RWPE1 (cell line): ENCODE measurements at regions of chr5 and their contacts with region 1.

Region 1: DNA sequence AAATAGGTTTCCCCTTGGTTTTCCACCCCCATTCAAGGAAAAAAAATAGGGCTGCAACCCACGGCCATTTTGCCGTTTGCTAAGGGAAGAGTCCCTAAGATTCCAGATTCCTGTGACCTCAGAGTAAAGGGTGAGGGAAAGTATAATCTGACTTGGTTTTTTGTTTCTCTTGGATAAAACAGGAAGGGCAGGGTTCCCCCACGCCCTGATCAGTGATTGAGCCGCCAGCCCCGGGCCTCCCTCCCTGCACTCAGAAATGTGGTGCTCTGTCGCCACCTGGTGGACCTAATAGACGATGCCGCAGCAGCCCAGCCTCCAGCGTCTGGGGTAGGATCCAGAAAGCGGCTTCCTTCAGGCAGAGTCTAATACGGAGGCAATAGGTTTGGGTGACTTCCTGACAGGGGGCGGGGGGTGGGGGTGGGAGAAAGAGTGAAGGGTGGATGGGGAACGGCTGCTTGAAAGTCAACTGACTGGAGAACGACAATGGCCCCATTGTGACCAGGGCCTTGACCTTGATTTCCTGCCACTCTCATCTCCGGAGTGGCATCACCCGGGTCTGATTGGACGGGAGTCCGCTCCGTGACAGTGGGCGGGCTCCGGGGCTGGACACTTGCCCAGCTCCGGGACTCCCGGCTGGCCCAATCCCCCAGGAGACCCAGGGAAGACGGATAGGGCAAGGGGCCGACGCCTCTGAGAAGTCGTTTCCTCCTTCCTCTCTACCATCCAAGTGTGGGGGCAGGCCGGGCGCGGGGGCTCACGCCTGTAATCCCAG is 17.8 kb upstream of the CYSTM1 start:
- DNase-seq: peak; percentile 96
- H3K27ac ChIP-seq: no peak overlapping the region
- CTCF ChIP-seq: peak; percentile 94

Region 2: GRCh38 chr5:139822553-139823425 is 334.4 kb before region 1 on chr5:
- CTCF ChIA-PET with region 1: no interaction called
- POLR2A ChIA-PET with region 1: no interaction called
- DNase-seq: no peak
- H3K27ac ChIP-seq: no peak overlapping the region
- CTCF ChIP-seq: no peak

Region 3: GRCh38 chr5:140075371-140075770 is 81.8 kb before region 1 on chr5:
- CTCF ChIA-PET with region 1: interaction called, 26 read pairs
- POLR2A ChIA-PET with region 1: no interaction called
- DNase-seq: peak; percentile 44
- H3K27ac ChIP-seq: no peak overlapping the region
- CTCF ChIP-seq: peak; percentile 45; the same call in 1 of the 2 replicates